GM12878 (cell line): ENCODE measurements at regions of chr1 and their contacts with region 1.

Region 1: GRCh38 chr1:183915625-183916510 is 110.9 kb downstream of the RGL1 start:
- DNase-seq: peak; percentile 68
- ATAC-seq: peak; percentile 60
- H3K4me3 ChIP-seq: no peak overlapping the region
- H3K27ac ChIP-seq: peak overlapping the region; percentile 62
- H3K4me1 ChIP-seq: peaks cover 33% of the 10 kb centered on the region
- H3K27me3 ChIP-seq: no peaks in the 10 kb centered on the region
- CTCF ChIP-seq: peak; percentile 66 to 91 (median 69)
- EP300 ChIP-seq: no peak
- POLR2A ChIP-seq: no peak
- RAD21 ChIP-seq: peak; percentile 98

Region 2: GRCh38 chr1:183622884-183623785 is 292.7 kb before region 1 on chr1:
- CTCF ChIA-PET with region 1: interaction called, 30 read pairs
- POLR2A ChIA-PET with region 1: no interaction called
- RAD21 ChIA-PET with region 1: interaction called, 12 read pairs
- SMC1A ChIA-PET with region 1: interaction called, 11 read pairs
- in situ Hi-C with region 1: no loop called
- intact Hi-C with region 1: no loop called
- DNase-seq: no peak
- ATAC-seq: peak; percentile 94
- H3K4me3 ChIP-seq: no peak overlapping the region
- H3K27ac ChIP-seq: no peak overlapping the region
- H3K4me1 ChIP-seq: no peaks in the 10 kb centered on the region; the same call in 1 of the 2 replicates
- H3K27me3 ChIP-seq: no peaks in the 10 kb centered on the region
- CTCF ChIP-seq: peak; percentile 73 to 77 (median 77); a peak in 5 of 6 replicates
- EP300 ChIP-seq: no peak
- POLR2A ChIP-seq: peak; percentile 25; the same call in 1 of the 2 replicates
- RAD21 ChIP-seq: peak; percentile 86

Region 3: DNA sequence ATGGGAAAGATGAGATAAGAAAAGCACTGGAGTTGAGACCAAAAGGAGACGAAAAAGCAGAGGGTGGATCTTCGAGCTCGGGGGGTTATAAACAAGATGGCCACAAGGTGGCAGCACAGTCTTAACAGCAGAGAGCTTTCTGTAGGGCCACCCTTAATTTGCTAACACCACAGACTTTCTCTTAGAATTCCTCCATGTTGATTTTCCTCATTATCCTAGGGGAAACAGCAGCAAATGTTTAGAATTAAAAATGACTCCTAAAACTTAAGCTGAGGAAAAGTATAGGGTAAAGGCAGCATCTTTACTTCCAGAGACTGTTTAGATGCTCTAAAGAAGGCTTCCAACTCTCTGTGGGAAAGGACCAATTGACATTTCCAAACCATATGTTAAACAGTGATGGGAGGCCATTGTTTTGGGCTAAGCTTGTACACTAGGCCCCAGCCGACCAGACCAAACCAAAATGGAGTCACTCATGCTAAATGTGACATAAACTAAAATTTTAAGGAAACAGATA is 260.2 kb before region 1 on chr1:
- CTCF ChIA-PET with region 1: interaction called, 360 read pairs
- POLR2A ChIA-PET with region 1: interaction called, 39 read pairs
- RAD21 ChIA-PET with region 1: interaction called, 299 read pairs
- SMC1A ChIA-PET with region 1: interaction called, 331 read pairs
- in situ Hi-C with region 1: loop called (anchors 5 kb)
- intact Hi-C with region 1: loop called (anchors 1 kb)
- DNase-seq: peak; percentile 61
- ATAC-seq: peak; percentile 66
- H3K4me3 ChIP-seq: no peak overlapping the region
- H3K27ac ChIP-seq: no peak overlapping the region
- H3K4me1 ChIP-seq: peaks cover 31% of the 10 kb centered on the region
- H3K27me3 ChIP-seq: no peaks in the 10 kb centered on the region
- CTCF ChIP-seq: peak; percentile 80 to 88 (median 80); a peak in 5 of 6 replicates
- EP300 ChIP-seq: no peak
- POLR2A ChIP-seq: no peak
- RAD21 ChIP-seq: peak; percentile 92

Region 4: DNA sequence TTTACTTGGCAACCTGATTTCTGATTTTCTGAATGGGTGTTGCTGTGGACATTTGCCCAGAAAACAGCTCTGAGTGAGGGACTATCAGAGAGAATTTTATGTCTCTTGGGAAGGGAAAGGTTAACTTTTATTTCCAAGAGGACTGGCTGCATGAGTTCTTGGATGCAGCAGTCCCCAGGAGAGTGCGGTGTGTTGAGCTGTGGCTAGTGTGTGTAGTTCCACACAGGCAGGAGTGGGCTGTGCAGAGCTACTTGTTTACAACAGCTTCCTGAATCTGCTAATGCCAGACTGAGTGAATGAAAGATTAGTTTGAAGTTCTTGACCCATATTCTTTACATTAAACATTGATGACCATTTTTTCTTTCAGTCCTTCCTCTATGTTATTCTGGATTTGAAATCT is 221.8 kb before region 1 on chr1:
- CTCF ChIA-PET with region 1: interaction called, 34 read pairs
- POLR2A ChIA-PET with region 1: no interaction called
- RAD21 ChIA-PET with region 1: interaction called, 20 read pairs
- SMC1A ChIA-PET with region 1: interaction called, 36 read pairs
- in situ Hi-C with region 1: no loop called
- intact Hi-C with region 1: loop called (anchors 10 kb)
- DNase-seq: no peak
- ATAC-seq: no peak
- H3K4me3 ChIP-seq: no peak overlapping the region
- H3K27ac ChIP-seq: no peak overlapping the region
- H3K4me1 ChIP-seq: peaks cover 11% of the 10 kb centered on the region; the same call in 1 of the 2 replicates
- H3K27me3 ChIP-seq: no peaks in the 10 kb centered on the region
- CTCF ChIP-seq: no peak
- EP300 ChIP-seq: no peak
- POLR2A ChIP-seq: no peak
- RAD21 ChIP-seq: no peak

Region 5: GRCh38 chr1:183841950-183842794 is 73.7 kb before region 1 on chr1:
- CTCF ChIA-PET with region 1: interaction called, 8 read pairs
- POLR2A ChIA-PET with region 1: interaction called, 4 read pairs
- RAD21 ChIA-PET with region 1: interaction called, 18 read pairs
- SMC1A ChIA-PET with region 1: interaction called, 26 read pairs
- in situ Hi-C with region 1: no loop called
- intact Hi-C with region 1: loop called (anchors 1 kb)
- DNase-seq: peak; percentile 85
- ATAC-seq: peak; percentile 93
- H3K4me3 ChIP-seq: peak overlapping the region; percentile 12
- H3K27ac ChIP-seq: peak overlapping the region; percentile 99
- H3K4me1 ChIP-seq: peaks cover 46% of the 10 kb centered on the region
- H3K27me3 ChIP-seq: no peaks in the 10 kb centered on the region
- CTCF ChIP-seq: no peak
- EP300 ChIP-seq: peak; percentile 74 to 75; a peak in 3 of 4 replicates
- POLR2A ChIP-seq: peak; percentile 53; the same call in 1 of the 2 replicates
- RAD21 ChIP-seq: 0 out of 2 replicates have a peak, but pooled peaks have one; percentile 22

Region 6: DNA sequence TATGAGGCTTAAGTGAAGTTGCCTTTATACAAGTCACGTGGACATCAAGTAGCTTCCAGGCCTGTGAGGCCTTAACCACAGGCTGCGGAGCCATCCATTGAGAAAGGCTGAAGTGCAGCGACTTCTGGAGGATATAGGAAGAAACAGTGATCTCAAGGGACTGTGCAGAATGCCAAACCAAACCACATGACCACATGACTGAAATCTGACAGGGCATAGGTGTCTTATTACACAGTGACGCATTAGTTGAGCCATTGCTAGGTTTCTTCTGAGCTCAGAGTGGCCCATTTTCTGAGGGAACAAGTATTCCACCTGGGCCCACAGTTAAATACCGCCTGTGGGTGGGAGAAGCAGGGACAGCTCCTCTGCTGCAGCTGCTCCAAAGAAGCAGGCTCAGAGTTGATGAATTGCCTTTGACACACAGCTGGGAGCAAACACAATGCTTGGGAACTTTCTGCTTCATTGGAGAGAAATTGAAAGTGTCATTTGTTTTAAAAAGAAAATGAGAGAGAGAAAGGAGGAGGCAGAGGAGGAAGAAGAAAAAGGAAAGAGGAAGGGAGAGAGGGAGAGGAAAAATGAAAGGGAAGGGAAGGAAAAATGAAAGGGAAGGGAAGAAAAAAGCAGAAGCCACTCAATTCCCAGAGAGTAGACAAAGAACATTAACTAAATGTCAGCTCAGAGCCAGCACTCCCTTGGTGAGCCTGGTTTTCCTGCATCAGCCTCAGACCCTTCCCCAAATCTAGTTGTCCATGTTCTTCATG is 27.2 kb after region 1 on chr1:
- CTCF ChIA-PET with region 1: interaction called, 16 read pairs
- POLR2A ChIA-PET with region 1: no interaction called
- RAD21 ChIA-PET with region 1: interaction called, 13 read pairs
- SMC1A ChIA-PET with region 1: interaction called, 15 read pairs
- in situ Hi-C with region 1: no loop called
- intact Hi-C with region 1: no loop called
- DNase-seq: peak; percentile 34
- ATAC-seq: peak; percentile 98
- H3K4me3 ChIP-seq: no peak overlapping the region
- H3K27ac ChIP-seq: no peak overlapping the region
- H3K4me1 ChIP-seq: 0 out of 2 replicates have a peak, but pooled peaks cover 3% of the 10 kb centered on the region
- H3K27me3 ChIP-seq: no peaks in the 10 kb centered on the region; a peak in 1 of 4 replicates
- CTCF ChIP-seq: no peak
- EP300 ChIP-seq: no peak
- POLR2A ChIP-seq: no peak
- RAD21 ChIP-seq: no peak